Left lung (tissue), 14 donors: ENCODE measurements at regions of chr14 and their contacts with region 1.

Region 1: DNA sequence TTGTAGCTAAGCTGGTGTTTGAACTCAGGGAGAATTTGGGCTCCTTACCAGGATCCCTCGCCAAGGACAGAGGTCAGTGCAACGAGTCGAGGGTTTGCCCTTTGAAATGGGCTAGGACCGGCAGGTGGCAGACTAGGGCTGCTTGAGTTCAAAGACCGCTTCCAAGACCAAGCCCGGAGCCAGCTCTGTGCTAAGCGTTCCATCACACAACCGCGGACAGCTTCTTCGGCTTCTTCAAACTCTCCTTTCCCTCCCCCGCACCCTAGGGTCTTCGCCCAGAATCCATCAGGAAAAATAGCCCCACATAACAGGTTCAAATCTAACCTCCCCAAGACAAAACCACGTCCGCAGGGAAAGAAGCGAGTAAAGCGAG is 705 bp upstream of the FLVCR2 start:
- DNase-seq: peak; percentile 67 to 92 (median 86)
- ATAC-seq: peak; percentile 89
- H3K4me3 ChIP-seq: peak overlapping the region; percentile 49 to 72
- H3K27ac ChIP-seq: peak overlapping the region; percentile 79 to 88
- H3K4me1 ChIP-seq: peaks cover 4 to 27% of the 10 kb centered on the region in 2 donors
- H3K27me3 ChIP-seq: no peaks in the 10 kb centered on the region
- CTCF ChIP-seq: peak; percentile 54 to 78

Region 2: GRCh38 chr14:75654127-75654732 is 76.5 kb after region 1 on chr14:
- intact Hi-C with region 1: loop called in 1 of 2 experiments (anchors 2 kb)
- DNase-seq: peak; percentile 46 to 86 (median 76)
- ATAC-seq: peak; percentile 95
- H3K4me3 ChIP-seq: no peak overlapping the region
- H3K27ac ChIP-seq: no peak overlapping the region
- H3K4me1 ChIP-seq: peaks cover 0 to 14% of the 10 kb centered on the region in 2 donors
- H3K27me3 ChIP-seq: no peaks in the 10 kb centered on the region
- CTCF ChIP-seq: peak; percentile 94 to 97